ENCODE measurements at regions of chr3 and their contacts with region 1.

Region 1: DNA sequence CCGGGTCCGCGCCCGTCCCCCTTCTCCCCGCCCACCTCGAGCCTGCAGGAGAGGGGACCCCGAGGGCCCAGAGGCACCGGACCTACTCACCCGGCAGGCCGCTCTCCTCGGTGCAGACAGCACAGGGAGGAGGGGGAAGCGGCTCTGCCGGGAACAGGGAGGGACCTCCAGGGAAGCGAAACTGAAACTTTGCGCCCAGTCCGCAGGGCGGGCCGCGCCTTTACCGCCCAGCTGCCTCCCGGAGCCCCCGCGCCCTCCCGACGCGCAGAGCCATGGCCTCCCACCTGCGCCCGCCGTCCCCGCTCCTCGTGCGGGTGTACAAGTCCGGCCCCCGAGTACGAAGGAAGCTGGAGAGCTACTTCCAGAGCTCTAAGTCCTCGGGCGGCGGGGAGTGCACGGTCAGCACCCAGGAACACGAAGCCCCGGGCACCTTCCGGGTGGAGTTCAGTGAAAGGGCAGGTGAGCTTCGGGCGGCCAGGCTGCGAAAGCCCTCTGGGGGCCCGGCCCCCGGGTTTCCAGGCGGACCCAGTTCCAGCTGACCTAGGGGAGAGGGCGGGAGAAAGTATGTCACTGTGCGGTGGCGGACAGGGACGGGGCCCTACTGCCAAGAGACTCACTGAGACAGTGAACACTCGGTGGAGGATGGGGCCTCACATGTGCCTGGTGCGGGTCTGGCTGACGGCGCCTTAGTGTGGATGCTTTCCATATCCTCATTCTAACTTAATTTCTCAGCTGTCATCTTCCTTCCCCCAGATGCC is at the starts of genes DTX3L and PARP9:
- DNase-seq: peak; percentile 96
- total RNA-seq, gene DTX3L: 14.3 TPM
- total RNA-seq, gene PARP9: 15.0 TPM

Region 2: DNA sequence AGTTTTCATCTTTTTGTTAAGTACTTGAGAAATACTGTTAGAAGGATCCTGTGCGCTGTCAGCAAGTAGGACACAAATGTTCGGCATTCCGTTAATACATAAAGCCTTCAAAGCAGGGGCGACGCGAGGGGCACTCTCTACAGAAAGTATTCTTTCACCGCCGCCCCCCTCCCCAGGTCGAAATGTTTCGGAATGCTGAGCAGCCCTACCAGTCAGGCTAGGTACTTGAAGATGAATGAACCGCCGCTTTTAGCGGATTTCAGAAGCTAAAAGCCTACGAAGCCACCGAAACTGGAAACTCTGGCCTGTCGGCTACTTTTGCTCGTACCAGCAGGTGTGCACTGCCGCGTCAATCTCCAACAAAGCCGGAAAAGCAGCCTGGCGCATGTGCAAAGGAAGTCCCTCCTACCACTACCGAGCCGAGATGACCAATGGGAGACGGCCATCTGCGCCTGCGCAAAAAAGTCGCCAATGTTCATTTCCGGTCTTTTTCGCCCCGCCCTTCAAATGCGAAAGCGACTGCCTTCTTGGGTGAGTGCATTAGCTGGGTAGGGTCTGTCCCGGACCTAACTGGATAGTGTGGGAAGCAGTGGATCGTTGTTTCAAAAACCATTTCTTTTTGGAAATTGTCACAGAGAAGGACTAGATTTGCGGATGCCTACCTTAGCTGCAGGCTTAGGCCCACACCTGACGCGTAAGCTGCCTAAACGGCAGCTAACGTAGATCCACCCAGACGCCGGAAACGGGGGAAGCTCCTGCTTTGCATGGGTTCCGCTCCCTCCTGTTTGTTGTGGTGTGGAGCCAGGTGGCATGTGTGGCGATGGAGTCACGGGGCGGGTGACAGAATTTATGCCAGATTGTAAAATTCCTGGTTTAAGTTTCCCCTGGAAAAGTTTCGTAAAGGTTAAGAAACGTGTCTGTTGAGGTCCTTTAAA is 148.3 kb before region 1 on chr3 and contains the start of gene WDR5B:
- intact Hi-C with region 1: loop called (anchors 2 kb)
- DNase-seq: peak; percentile 99
- total RNA-seq, gene WDR5B: 2.7 TPM

Region 3: DNA sequence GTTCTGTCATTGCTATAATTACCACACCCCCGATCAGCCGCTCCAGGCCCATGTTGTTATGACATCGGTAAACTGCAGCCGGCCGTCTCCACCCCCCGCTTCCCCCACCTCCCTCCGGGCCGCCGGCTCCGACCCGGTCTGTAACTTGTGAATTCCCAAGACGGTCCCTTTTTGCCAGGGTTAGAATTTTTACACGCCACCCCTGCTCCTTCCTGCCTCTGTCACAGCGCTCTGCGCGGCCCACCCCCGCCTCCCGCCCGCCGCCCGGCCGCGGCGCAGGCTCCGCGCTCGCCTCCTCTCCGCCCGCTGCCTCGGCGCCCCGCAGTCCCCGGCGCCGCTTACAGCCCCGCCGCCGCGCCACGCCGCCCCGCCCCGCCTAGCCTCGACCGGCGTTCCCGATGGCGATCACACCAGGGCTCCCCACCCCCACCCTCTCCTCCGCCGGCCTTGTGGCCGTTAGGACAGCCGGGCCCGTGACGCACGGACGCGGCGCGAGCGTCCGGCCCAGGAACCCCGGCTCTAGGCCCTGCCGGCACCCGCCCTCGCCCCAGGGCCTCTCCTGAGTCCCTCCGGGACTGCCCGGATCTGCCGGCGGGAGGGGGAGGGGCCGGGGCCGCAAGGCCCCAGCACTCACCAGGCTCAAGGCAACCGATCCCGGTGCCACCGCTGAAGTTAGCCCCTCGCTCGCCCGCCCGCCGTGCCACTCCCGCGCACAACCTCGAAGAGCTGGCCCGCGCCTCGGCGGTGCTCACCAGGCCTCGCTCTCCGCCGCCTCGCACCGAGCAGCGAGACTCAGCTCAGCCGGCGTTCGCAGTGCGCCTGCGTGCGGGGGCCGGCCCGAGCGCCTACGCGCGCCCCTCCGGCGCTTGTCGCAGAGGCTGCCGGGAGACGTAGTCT is 50.0 kb before region 1 on chr3 and contains the start of gene KPNA1:
- intact Hi-C with region 1: loop called (anchors 2 kb)
- DNase-seq: peak; percentile 95
- total RNA-seq, gene KPNA1: 94.7 TPM

Region 4: GRCh38 chr3:122679085-122679881 is 114.9 kb after region 1 on chr3:
- intact Hi-C with region 1: loop called (anchors 1 kb)
- DNase-seq: peak; percentile 90

Region 5: DNA sequence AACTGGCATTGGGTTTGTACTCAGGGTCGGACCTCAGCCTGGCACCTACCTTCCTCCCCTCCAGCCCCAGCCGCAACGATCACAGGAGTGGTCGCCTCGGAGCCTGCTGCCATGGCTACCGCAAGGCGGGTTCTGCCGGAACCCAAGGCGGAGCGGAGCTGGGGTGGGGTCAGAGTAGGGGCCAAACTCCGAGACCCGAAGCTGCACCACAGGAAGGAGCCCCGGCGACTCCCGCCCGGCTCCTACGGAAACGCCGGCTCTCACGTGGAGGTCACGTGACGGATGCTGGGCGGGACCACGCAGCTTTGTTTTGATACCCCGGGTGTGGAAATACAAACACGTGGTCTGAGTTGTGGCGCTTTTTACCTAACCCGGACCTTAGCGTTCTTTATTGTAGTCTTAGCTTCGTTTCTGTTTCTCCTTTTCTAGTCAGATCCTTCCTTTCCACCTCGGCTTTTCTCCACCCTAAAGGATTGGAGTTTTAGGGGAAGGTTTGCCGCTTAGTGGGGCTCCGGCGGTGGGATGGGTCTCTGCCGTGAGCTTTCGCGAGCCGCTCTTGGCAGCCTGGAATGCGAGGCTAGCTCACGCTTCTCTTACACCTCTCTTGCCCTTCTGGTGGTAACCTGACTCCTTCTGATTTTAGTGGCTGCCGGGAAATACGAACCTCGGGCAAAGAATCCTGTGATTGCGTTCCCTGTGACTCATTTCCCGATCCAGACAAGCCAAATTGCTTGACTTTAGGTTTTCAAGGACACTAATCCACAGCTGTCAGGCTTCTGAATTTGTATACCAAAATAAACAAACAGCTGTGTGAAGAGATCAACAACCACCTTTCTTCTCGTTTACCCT is 229.5 kb after region 1 on chr3 and contains the start of gene HSPBAP1:
- intact Hi-C with region 1: loop called (anchors 10 kb)
- DNase-seq: peak; percentile 96
- total RNA-seq, gene HSPBAP1: 4.3 TPM

Measured in cardiac septum (tissue), 1 donor.